ENCODE measurements at regions of chr1 and their contacts with region 1.

Region 1: DNA sequence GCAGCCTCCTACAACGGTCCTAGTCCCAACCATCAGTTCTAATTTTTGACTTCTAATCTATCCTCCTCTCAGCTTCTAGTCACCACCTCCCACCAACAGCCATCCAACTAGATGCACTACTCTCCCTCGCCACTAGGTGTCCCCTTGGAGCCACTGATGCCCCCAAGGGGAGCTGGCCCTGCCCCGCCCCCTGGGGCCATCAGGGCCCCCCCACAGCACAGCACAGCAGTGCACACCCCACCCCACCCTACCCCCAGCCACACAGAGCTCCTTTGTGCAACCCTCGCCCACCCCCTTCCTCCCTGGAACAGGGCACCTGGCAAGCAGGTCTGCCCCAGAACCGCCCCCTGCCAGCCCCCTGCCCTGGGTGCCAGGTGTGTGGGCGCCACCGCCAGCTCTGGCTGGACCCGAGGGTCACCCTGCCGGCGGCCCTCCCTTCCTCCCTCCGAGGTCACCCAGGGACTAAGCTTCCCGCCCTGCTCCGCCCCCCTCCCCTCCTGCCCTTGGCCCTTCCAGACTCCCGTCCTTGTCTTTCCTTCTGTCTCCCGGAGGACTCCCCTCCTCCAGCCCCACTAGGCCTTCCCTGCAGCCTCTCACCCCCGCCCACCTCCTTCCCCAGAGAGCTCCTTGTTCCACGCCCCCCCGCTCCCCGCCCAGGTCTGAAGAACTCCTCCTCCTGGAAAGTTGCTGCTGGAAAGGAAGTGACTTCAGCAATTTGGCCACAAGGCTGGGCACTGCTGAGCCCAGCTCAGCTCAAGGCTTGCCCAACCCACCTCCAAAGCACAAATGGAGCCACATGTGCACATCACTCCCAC is 47.0 kb downstream of the AHDC1 start:
- DNase-seq: peak; percentile 81
- H3K4me3 Mint-ChIP-seq: no peak overlapping the region
- H3K27ac Mint-ChIP-seq: peak overlapping the region; percentile 49
- H3K4me1 Mint-ChIP-seq: peaks cover 17% of the 10 kb centered on the region
- H3K27me3 Mint-ChIP-seq: no peaks in the 10 kb centered on the region

Region 2: GRCh38 chr1:26645734-26646133 is 911.3 kb before region 1 on chr1:
- CTCF ChIA-PET with region 1: no interaction called
- POLR2A ChIA-PET with region 1: no interaction called
- intact Hi-C with region 1: no loop called
- DNase-seq: no peak
- H3K4me3 Mint-ChIP-seq: no peak overlapping the region
- H3K27ac Mint-ChIP-seq: no peak overlapping the region
- H3K4me1 Mint-ChIP-seq: no peaks in the 10 kb centered on the region
- H3K27me3 Mint-ChIP-seq: no peaks in the 10 kb centered on the region

Region 3: GRCh38 chr1:27517301-27517700 is 39.7 kb before region 1 on chr1:
- CTCF ChIA-PET with region 1: interaction called, 10 read pairs
- POLR2A ChIA-PET with region 1: no interaction called
- intact Hi-C with region 1: no loop called
- DNase-seq: no peak
- H3K4me3 Mint-ChIP-seq: no peak overlapping the region
- H3K27ac Mint-ChIP-seq: no peak overlapping the region
- H3K4me1 Mint-ChIP-seq: peaks cover 25% of the 10 kb centered on the region
- H3K27me3 Mint-ChIP-seq: no peaks in the 10 kb centered on the region

Region 4: GRCh38 chr1:27536767-27537166 is 20.2 kb before region 1 on chr1:
- CTCF ChIA-PET with region 1: interaction called, 27 read pairs
- POLR2A ChIA-PET with region 1: no interaction called
- intact Hi-C with region 1: no loop called
- DNase-seq: no peak
- H3K4me3 Mint-ChIP-seq: no peak overlapping the region
- H3K27ac Mint-ChIP-seq: no peak overlapping the region
- H3K4me1 Mint-ChIP-seq: peaks cover 12% of the 10 kb centered on the region
- H3K27me3 Mint-ChIP-seq: no peaks in the 10 kb centered on the region

Region 5: GRCh38 chr1:27542408-27543273 is 14.3 kb before region 1 on chr1:
- CTCF ChIA-PET with region 1: interaction called, 27 read pairs
- POLR2A ChIA-PET with region 1: no interaction called
- intact Hi-C with region 1: no loop called
- DNase-seq: peak; percentile 72
- H3K4me3 Mint-ChIP-seq: no peak overlapping the region
- H3K27ac Mint-ChIP-seq: peak overlapping the region; percentile 49
- H3K4me1 Mint-ChIP-seq: peaks cover 8% of the 10 kb centered on the region
- H3K27me3 Mint-ChIP-seq: no peaks in the 10 kb centered on the region

Region 6: GRCh38 chr1:27568300-27569087 is 11.5 kb after region 1 on chr1:
- CTCF ChIA-PET with region 1: interaction called, 102 read pairs
- POLR2A ChIA-PET with region 1: interaction called, 3 read pairs
- intact Hi-C with region 1: no loop called
- DNase-seq: peak; percentile 96
- H3K4me3 Mint-ChIP-seq: peak overlapping the region; percentile 40
- H3K27ac Mint-ChIP-seq: no peak overlapping the region
- H3K4me1 Mint-ChIP-seq: peaks cover 12% of the 10 kb centered on the region
- H3K27me3 Mint-ChIP-seq: no peaks in the 10 kb centered on the region

Region 7: DNA sequence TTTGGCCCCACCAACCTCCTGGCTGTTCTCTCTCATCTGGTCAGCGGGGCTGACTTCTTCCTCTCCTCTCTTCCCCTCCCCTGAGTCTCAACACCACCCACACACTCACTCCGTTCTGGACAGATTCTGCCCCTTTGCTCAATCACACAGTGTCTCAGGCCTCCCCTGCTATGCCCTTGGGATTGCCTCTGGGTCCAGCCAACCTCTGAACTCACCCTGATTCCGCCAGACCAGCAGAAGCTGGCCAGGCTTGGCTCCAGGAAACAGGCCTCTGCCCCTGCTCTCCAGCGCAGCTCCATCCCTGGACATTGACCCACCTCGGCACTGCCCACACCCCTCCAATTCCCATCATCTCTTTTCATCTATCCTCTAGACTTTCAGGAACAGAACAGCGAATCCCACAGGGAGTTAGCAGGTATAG is 24.8 kb after region 1 on chr1:
- CTCF ChIA-PET with region 1: interaction called, 16 read pairs
- POLR2A ChIA-PET with region 1: no interaction called
- intact Hi-C with region 1: no loop called
- DNase-seq: no peak
- H3K4me3 Mint-ChIP-seq: no peak overlapping the region
- H3K27ac Mint-ChIP-seq: no peak overlapping the region
- H3K4me1 Mint-ChIP-seq: peaks cover 7% of the 10 kb centered on the region
- H3K27me3 Mint-ChIP-seq: no peaks in the 10 kb centered on the region

Region 8: GRCh38 chr1:27591622-27592021 is 34.6 kb after region 1 on chr1:
- CTCF ChIA-PET with region 1: interaction called, 10 read pairs
- POLR2A ChIA-PET with region 1: no interaction called
- intact Hi-C with region 1: no loop called
- DNase-seq: no peak
- H3K4me3 Mint-ChIP-seq: no peak overlapping the region
- H3K27ac Mint-ChIP-seq: no peak overlapping the region
- H3K4me1 Mint-ChIP-seq: no peaks in the 10 kb centered on the region
- H3K27me3 Mint-ChIP-seq: no peaks in the 10 kb centered on the region

Measured in activated CD4-positive, alpha-beta memory T cell treated with anti-CD3 and anti-CD28 coated beads for 36 hours (primary cell).